GM23248 (cell line): ENCODE measurements at regions of chr9 and their contacts with region 1.

Region 1: GRCh38 chr9:30574355-30575151 is 1809.9 kb upstream of the ACO1 start:
- DNase-seq: no peak
- H3K4me3 ChIP-seq: no peak overlapping the region
- H3K27ac ChIP-seq: no peak overlapping the region
- H3K4me1 ChIP-seq: no peaks in the 10 kb centered on the region
- H3K27me3 ChIP-seq: no peaks in the 10 kb centered on the region

Region 2: DNA sequence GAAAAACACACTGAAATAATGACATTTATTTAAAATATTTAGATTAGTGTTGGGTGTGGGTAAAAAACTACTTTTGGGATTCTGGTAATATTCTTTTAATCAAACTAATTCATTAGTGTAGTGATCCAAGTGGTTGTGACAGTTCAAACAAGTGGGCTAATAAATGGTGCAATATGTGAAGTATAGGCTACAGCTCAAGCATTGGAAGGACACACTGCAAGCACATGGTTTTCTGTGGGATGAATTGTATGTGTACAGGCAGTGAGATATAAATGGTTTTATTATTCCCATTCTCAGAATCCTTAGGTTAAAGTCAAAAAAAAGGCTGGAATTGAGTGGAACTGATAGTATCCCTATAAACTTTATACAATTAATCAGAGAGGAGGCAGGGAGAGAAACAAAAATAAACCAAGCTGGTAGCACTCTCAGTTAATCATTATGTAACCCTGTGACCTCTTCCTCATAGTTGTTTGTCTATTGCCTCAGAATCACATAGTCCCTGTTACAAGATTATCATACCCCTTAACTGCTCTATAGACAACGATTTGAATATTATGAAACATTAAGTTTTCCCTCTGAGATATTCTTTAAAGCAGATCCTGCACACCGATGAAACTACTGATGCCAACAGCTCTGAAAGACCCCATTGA is 54.5 kb after region 1 on chr9:
- in situ Hi-C with region 1: loop called (anchors 10 kb)
- DNase-seq: no peak
- H3K4me3 ChIP-seq: no peak overlapping the region
- H3K27ac ChIP-seq: no peak overlapping the region
- H3K4me1 ChIP-seq: no peaks in the 10 kb centered on the region
- H3K27me3 ChIP-seq: no peaks in the 10 kb centered on the region